Mammary epithelial cell (primary cell): ENCODE measurements at regions of chr3 and their contacts with region 1.

Region 1: GRCh38 chr3:120410541-120410940 is 40.3 kb downstream of the FSTL1 start:
- DNase-seq: no peak
- H3K4me3 ChIP-seq: no peak overlapping the region
- H3K27ac ChIP-seq: no peak overlapping the region
- H3K4me1 ChIP-seq: no peaks in the 10 kb centered on the region
- H3K27me3 ChIP-seq: no peaks in the 10 kb centered on the region
- CTCF ChIP-seq: no peak

Region 2: GRCh38 chr3:120239644-120240043 is 170.9 kb before region 1 on chr3:
- CTCF ChIA-PET with region 1: no interaction called
- dilution Hi-C with region 1: no loop called
- in situ Hi-C with region 1: loop called (anchors 5 to 10 kb)
- intact Hi-C with region 1: no loop called
- DNase-seq: no peak
- H3K4me3 ChIP-seq: no peak overlapping the region
- H3K27ac ChIP-seq: no peak overlapping the region
- H3K4me1 ChIP-seq: no peaks in the 10 kb centered on the region
- H3K27me3 ChIP-seq: no peaks in the 10 kb centered on the region
- CTCF ChIP-seq: no peak